Panc1 (cell line): ENCODE measurements at regions of chr19 and their contacts with region 1.

Region 1: GRCh38 chr19:55111238-55111831 is 6.1 kb downstream of the PPP1R12C start:
- DNase-seq: no peak
- ATAC-seq: no peak
- H3K4me3 ChIP-seq: no peak overlapping the region
- H3K27ac ChIP-seq: no peak overlapping the region
- H3K4me1 ChIP-seq: peaks cover 29% of the 10 kb centered on the region
- H3K27me3 ChIP-seq: no peaks in the 10 kb centered on the region
- CTCF ChIP-seq: no peak

Region 2: DNA sequence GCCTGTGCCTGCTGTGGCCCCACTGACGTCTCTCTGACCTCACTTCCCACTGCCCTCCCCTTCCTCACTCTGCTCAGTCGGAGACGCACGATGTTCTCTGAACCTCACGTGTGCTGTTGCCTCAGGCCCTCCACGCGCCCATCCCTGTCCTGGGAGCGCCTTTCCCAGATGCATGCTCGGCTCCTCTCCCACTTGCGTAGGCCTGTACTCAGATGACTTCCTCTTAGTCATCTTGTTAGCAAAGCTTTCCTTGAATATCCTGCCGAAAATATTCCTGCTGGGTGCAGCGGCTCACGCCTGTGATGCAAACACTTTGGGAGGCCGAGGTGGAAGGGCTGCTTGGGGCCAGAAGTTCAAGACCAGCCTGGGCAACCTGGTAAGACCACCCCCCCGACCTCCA is 78.1 kb after region 1 on chr19:
- CTCF ChIA-PET with region 1: no interaction called
- POLR2A ChIA-PET with region 1: interaction called, 11 read pairs
- in situ Hi-C with region 1: no loop called
- intact Hi-C with region 1: no loop called
- DNase-seq: peak; percentile 93
- ATAC-seq: peak; percentile 92
- H3K4me3 ChIP-seq: peak overlapping the region; percentile 6 to 17; a peak in 1 of 4 replicates
- H3K27ac ChIP-seq: peak overlapping the region; percentile 78
- H3K4me1 ChIP-seq: peaks cover 12% of the 10 kb centered on the region; the same call in 1 of the 2 replicates
- H3K27me3 ChIP-seq: no peaks in the 10 kb centered on the region
- CTCF ChIP-seq: no peak